Activated CD8-positive, alpha-beta T cell treated with anti-CD3 and anti-CD28 coated beads for 36 hours (primary cell): ENCODE measurements at regions of chr14 and their contacts with region 1.

Region 1: GRCh38 chr14:57268161-57269069 is at the starts of genes AP5M1 and EXOC5:
- DNase-seq: peak; percentile 95
- ATAC-seq: peak; percentile 92
- H3K4me3 Mint-ChIP-seq: peak within 1 kb of the TSS; percentile 88
- H3K27ac Mint-ChIP-seq: peak within 1 kb of the TSS; percentile 99
- H3K4me1 Mint-ChIP-seq: peaks cover 52% of the 10 kb centered on the region
- H3K27me3 Mint-ChIP-seq: no peaks in the 10 kb centered on the region
- CTCF ChIP-seq: no peak
- total RNA-seq, gene AP5M1: 29.1 to 31.1 TPM
- total RNA-seq, gene EXOC5: 72.8 to 75.1 TPM

Region 2: GRCh38 chr14:57390028-57390805 is 121.8 kb after region 1 on chr14 and contains the start of gene NAA30:
- CTCF ChIA-PET with region 1: interaction called, 5 read pairs
- POLR2A ChIA-PET with region 1: interaction called, 10 read pairs
- intact Hi-C with region 1: no loop called
- DNase-seq: peak; percentile 96
- ATAC-seq: peak; percentile 92
- H3K4me3 Mint-ChIP-seq: peak within 1 kb of the TSS; percentile 82
- H3K27ac Mint-ChIP-seq: peak within 1 kb of the TSS; percentile 92
- H3K4me1 Mint-ChIP-seq: peaks cover 40% of the 10 kb centered on the region
- H3K27me3 Mint-ChIP-seq: no peaks in the 10 kb centered on the region
- CTCF ChIP-seq: no peak
- total RNA-seq, gene NAA30: 13.7 to 14.1 TPM